WTC11 (cell line): ENCODE measurements at regions of chr7 and their contacts with region 1.

Region 1: DNA sequence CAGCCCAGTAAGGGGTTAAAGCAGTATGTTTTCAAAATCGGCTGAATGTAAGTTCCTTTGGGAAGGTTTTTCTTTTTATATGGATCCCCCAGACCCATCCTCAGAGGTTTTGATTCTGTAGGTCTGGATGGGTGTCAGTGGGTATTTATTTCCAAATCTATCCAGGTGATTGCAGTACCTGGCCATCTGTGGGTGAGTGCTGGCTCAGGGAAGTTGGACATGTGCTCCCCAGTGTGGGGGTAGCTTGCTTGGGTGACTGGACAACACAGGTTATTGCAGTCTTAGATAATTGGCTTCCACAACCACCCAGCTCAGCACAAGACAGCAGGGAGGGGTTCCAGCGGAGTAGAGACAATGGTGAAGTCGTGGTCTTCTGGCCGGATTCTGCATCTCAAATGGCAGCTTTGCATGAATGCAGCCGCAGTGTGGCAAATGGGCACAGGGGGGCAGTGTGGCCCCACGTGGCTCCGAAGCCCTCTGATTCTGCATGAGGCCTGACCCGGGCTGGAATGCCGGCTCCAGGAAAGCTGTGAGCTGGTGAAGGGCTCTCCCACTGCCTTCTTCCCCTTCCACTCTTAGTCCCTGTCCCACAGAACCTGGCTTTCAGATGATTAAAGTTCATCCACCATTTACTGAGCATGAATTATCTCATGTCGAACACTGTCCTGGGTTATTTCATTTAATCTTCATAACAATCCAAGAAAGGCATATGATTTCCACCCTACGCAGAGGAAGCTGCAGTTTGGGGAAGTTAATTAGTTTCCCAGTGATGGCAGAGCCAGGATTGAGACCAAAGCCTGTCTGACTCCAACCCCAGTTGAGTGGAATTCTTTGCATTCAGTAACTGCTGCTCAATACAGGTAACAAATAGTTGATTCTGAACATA is 64.5 kb upstream of the SYPL1 start:
- DNase-seq: peak; percentile 94
- ATAC-seq: peak; percentile 94
- H3K4me3 Mint-ChIP-seq: peak overlapping the region; percentile 35; the same call in 1 of the 2 replicates
- H3K27ac Mint-ChIP-seq: no peak overlapping the region
- H3K4me1 Mint-ChIP-seq: peaks cover 32% of the 10 kb centered on the region
- H3K27me3 Mint-ChIP-seq: no peaks in the 10 kb centered on the region
- CTCF ChIP-seq: peak; percentile 74

Region 2: GRCh38 chr7:106022193-106022821 is 154.3 kb before region 1 on chr7:
- CTCF ChIA-PET with region 1: no interaction called
- POLR2A ChIA-PET with region 1: no interaction called
- DNase-seq: no peak
- ATAC-seq: no peak
- H3K4me3 Mint-ChIP-seq: no peak overlapping the region
- H3K27ac Mint-ChIP-seq: no peak overlapping the region
- H3K4me1 Mint-ChIP-seq: peaks cover 30% of the 10 kb centered on the region
- H3K27me3 Mint-ChIP-seq: no peaks in the 10 kb centered on the region; the same call in 1 of the 2 replicates
- CTCF ChIP-seq: no peak

Region 3: DNA sequence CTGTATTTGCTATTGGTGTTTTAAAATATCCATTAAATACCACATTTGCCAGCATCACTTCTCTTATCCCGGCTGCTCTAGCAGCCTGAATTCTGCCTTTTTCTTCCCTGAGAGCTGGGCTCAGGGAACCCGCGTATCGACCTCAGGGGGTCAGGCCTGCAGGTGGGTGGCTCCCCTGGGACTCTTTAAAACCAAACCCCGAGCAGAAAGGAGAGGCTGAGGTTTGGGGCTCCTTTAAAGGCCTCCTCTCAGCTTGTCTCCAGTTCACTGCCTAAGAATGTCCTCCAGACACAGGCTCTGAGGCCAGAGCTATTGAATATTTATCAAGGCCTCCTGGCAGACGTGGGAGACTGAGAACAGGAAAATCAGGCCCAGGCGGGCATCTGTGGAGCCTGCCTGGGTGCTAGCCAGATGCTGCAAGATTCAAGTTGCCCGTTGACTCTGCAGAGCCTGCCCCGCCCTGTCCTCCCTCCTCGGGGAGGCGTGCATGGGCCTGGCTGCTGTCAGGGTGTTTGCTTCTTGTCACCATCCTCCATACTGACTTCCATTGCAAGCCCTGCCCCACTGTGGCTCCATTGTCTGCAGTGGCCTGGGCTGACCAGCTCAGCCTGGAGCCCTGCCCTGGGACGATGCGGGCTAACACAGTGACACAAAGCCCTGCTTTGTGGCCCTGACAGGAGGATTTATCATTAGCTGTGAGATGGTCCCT is 118.3 kb before region 1 on chr7:
- CTCF ChIA-PET with region 1: no interaction called
- POLR2A ChIA-PET with region 1: no interaction called
- DNase-seq: no peak
- ATAC-seq: no peak
- H3K4me3 Mint-ChIP-seq: no peak overlapping the region
- H3K27ac Mint-ChIP-seq: no peak overlapping the region
- H3K4me1 Mint-ChIP-seq: peaks cover 31% of the 10 kb centered on the region
- H3K27me3 Mint-ChIP-seq: peaks cover 3% of the 10 kb centered on the region; the same call in 1 of the 2 replicates
- CTCF ChIP-seq: no peak

Region 4: GRCh38 chr7:106112117-106112971 is 64.3 kb before region 1 on chr7 and contains the start of gene SYPL1:
- CTCF ChIA-PET with region 1: interaction called, 10 read pairs
- POLR2A ChIA-PET with region 1: no interaction called
- DNase-seq: peak; percentile 91
- ATAC-seq: peak; percentile 91
- H3K4me3 Mint-ChIP-seq: peak within 1 kb of the TSS; percentile 77
- H3K27ac Mint-ChIP-seq: peak within 1 kb of the TSS; percentile 91
- H3K4me1 Mint-ChIP-seq: peaks cover 42% of the 10 kb centered on the region
- H3K27me3 Mint-ChIP-seq: no peaks in the 10 kb centered on the region
- CTCF ChIP-seq: no peak
- total RNA-seq, gene SYPL1: 48.5 to 54.8 TPM (median 49.6 TPM) in 3 replicates

Region 5: DNA sequence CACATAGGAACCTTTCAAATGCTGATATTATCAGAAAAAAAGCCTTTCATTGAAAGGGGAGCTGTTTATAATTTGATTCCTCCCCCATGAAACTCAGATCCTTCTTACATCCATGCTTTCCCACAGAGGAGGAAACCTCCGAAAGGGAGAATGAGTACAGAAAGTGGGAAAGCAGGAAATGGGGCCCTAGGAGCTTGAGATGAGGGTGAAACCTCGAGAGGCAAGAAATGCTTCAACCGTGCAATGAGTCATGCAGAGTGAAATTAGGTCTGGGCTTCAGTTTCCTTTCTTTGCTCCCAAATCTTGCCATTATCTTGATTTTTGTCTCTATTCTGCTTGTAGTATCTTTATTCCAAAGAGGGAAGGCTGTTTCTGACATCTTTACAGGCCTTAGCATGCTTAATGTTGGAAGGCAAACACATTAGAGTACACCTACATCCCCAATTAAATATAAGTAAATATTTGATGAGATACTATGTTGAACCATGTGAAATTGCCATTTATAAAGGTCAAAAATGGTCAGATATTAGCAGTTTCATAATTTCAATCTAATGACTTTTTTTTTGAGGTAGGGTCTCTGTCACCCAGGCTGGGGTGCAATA is 29.1 kb after region 1 on chr7:
- CTCF ChIA-PET with region 1: interaction called, 14 read pairs
- POLR2A ChIA-PET with region 1: no interaction called
- DNase-seq: no peak
- ATAC-seq: no peak
- H3K4me3 Mint-ChIP-seq: no peak overlapping the region
- H3K27ac Mint-ChIP-seq: no peak overlapping the region
- H3K4me1 Mint-ChIP-seq: no peaks in the 10 kb centered on the region
- H3K27me3 Mint-ChIP-seq: peaks cover 8% of the 10 kb centered on the region
- CTCF ChIP-seq: no peak

Region 6: DNA sequence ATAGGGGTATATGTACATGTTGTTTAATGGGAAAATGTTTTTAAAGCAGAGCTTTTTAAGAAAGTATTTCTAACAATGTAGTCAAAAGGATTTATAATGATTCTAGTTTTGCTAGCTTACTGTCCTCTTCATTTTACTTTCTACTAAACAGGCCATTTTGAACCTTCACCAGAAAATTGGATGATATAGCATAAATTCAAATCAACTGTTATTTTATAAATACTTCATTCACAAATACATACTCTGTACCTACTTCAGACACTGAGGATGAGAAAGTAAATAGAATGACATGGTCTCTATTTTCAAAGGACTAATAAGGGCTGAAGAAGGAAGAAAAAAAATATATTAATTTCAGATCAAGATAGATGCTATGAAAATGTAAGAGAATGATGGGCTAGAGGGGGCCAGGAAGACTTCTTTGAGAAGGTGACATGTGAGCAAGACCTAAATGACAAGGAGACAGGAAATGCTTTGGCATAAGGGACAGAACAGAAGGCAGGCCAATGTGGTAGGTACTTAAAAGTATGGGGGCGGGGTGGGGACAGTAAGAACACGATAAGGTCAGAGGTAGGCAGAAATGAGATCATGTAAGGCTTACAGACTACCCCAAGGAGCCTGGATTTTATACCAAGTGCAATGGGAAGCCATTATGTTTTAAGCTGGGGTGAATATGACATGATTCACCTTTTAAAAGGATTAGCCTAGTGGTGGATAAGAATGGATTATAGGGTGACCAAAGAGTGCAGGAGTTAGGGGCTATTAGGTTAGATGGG is 103.0 kb after region 1 on chr7:
- CTCF ChIA-PET with region 1: interaction called, 20 read pairs
- POLR2A ChIA-PET with region 1: no interaction called
- DNase-seq: no peak
- ATAC-seq: no peak
- H3K4me3 Mint-ChIP-seq: no peak overlapping the region
- H3K27ac Mint-ChIP-seq: no peak overlapping the region
- H3K4me1 Mint-ChIP-seq: peaks cover 42% of the 10 kb centered on the region
- H3K27me3 Mint-ChIP-seq: no peaks in the 10 kb centered on the region
- CTCF ChIP-seq: no peak

Region 7: DNA sequence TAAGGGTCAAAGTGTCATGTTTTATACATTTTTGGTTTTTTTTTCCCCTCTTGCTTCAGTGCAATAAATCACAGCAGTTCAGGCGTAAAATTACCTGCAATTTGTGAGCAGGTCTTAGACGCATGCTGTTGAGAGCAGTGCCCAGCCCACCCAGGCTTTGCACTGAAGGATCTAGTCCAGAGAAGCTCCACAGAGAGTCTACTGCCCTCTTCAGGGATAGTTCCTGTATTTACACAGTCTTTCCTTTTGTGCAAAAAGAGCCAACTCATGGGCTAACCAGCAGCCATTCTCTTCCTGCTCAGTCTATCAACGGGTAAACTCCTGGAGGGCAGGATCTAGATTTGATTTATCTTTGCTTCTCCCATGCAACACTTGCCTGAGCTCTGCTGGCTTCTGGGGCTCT is 190.4 kb after region 1 on chr7:
- CTCF ChIA-PET with region 1: interaction called, 16 read pairs
- POLR2A ChIA-PET with region 1: no interaction called
- DNase-seq: peak; percentile 21
- ATAC-seq: peak; percentile 98
- H3K4me3 Mint-ChIP-seq: no peak overlapping the region
- H3K27ac Mint-ChIP-seq: no peak overlapping the region
- H3K4me1 Mint-ChIP-seq: no peaks in the 10 kb centered on the region; the same call in 1 of the 2 replicates
- H3K27me3 Mint-ChIP-seq: no peaks in the 10 kb centered on the region
- CTCF ChIP-seq: no peak

Region 8: GRCh38 chr7:106476751-106477150 is 300.1 kb after region 1 on chr7:
- CTCF ChIA-PET with region 1: no interaction called
- POLR2A ChIA-PET with region 1: no interaction called
- DNase-seq: no peak
- ATAC-seq: no peak
- H3K4me3 Mint-ChIP-seq: no peak overlapping the region
- H3K27ac Mint-ChIP-seq: no peak overlapping the region
- H3K4me1 Mint-ChIP-seq: no peaks in the 10 kb centered on the region
- H3K27me3 Mint-ChIP-seq: no peaks in the 10 kb centered on the region
- CTCF ChIP-seq: no peak

Region 9: DNA sequence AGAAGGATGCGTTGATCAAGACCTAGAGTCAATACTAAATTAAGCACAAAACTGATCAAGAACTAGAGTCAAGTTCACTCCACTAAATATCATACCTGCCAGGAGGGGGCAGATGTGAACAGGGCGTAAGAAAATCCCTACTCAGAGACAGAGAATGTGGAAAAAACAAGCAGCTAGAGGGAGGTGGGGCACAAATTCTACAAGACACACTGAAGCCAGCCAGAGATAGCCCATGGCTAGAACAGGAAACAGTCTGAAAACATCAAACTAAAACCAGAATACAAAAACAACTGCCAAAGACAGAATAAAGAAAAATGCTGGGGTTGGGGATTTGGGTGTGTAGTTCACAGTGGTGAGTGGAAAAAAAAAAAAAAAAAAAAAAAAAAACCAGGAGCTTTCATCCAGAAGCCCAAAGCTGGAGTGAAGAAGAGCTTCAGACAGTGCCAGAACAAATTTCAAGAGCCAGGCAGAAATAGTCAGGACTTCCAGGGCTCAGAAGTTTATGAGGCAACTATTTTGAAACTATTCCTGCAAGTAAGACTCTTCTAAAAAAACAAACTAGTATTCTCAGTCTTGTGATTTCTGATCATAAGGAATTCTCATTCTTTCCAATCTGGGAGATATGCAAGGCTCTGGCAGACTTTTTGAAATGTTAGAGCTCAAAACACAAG is 366.0 kb after region 1 on chr7:
- CTCF ChIA-PET with region 1: interaction called, 28 read pairs
- POLR2A ChIA-PET with region 1: no interaction called
- DNase-seq: peak; percentile 58
- ATAC-seq: peak; percentile 98
- H3K4me3 Mint-ChIP-seq: no peak overlapping the region
- H3K27ac Mint-ChIP-seq: peak overlapping the region; percentile 34; the same call in 1 of the 2 replicates
- H3K4me1 Mint-ChIP-seq: peaks cover 9% of the 10 kb centered on the region
- H3K27me3 Mint-ChIP-seq: no peaks in the 10 kb centered on the region
- CTCF ChIP-seq: peak; percentile 24; the same call in 1 of the 2 replicates

Region 10: DNA sequence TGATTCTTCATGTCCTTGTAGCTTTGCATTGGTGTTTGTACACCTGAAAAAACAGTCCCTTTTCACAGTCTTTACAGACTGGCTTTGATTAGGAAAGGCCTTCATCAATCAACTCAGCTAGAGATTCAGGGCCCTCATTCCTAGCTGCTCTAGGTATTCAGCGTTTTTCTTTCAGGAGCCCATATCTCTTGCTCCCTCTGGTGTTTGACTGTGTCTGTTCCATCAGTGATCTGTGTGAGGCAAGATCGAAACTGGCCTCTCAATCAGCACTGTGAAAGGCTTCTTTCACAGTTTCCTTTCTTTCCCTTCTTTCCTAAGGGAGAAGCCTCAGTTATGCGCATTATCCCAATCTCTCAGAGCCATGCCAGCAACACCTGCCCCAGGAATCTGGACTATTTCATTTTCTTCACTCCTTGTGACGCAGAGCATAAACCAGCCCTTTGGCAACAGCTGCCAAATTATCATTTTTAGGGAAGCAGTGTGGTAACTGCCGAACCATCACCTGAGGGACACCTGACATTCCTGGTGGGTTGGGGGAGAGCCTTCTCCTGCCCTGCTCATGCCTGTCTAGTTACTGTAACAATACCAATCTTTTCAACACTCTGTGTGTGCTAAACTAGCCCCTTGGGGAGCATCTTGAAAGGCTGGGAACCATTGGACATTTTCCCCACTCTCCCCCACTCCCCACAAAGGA is 560.0 kb after region 1 on chr7:
- CTCF ChIA-PET with region 1: interaction called, 42 read pairs
- POLR2A ChIA-PET with region 1: no interaction called
- DNase-seq: peak; percentile 30
- ATAC-seq: peak; percentile 98
- H3K4me3 Mint-ChIP-seq: no peak overlapping the region
- H3K27ac Mint-ChIP-seq: peak overlapping the region; percentile 93
- H3K4me1 Mint-ChIP-seq: peaks cover 15% of the 10 kb centered on the region
- H3K27me3 Mint-ChIP-seq: no peaks in the 10 kb centered on the region; the same call in 1 of the 2 replicates
- CTCF ChIP-seq: peak; percentile 32; the same call in 1 of the 2 replicates